ENCODE measurements at regions of chr5 and their contacts with region 1.

Region 1: GRCh38 chr5:55680353-55680752 is 31.8 kb downstream of the SLC38A9 start:
- DNase-seq: no peak
- ATAC-seq: no peak
- H3K4me3 ChIP-seq: no peak overlapping the region
- H3K27ac ChIP-seq: no peak overlapping the region
- H3K4me1 ChIP-seq: peaks cover 0 to 4% of the 10 kb centered on the region in 2 donors
- H3K27me3 ChIP-seq: no peaks in the 10 kb centered on the region
- CTCF ChIP-seq: no peak

Region 2: GRCh38 chr5:55338810-55339243 is 341.5 kb before region 1 on chr5:
- intact Hi-C with region 1: loop called in 1 of 2 experiments (anchors 10 kb)
- DNase-seq: no peak
- ATAC-seq: no peak
- H3K4me3 ChIP-seq: no peak overlapping the region
- H3K27ac ChIP-seq: no peak overlapping the region
- H3K4me1 ChIP-seq: peaks cover 0 to 11% of the 10 kb centered on the region in 2 donors
- H3K27me3 ChIP-seq: no peaks in the 10 kb centered on the region
- CTCF ChIP-seq: no peak

Region 3: DNA sequence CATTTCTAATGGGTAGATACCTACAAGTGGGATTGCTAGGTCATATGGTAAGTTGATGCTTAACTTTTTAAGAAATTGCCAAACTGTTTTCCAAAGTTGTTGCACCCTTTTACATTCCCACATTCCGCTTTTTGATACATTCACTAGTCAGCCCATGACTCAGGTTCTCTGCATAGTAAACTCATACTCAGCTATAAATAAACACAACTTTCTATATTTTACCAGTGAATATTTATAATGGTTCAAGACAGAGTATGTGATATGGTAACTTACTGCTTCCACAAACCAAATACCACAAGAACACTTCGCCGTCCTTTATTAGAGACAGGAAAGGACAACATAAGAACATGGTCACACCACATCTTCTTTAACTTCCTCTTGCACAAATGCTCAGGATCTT is 199.6 kb before region 1 on chr5:
- intact Hi-C with region 1: no loop called
- DNase-seq: no peak
- ATAC-seq: no peak
- H3K4me3 ChIP-seq: no peak overlapping the region
- H3K27ac ChIP-seq: no peak overlapping the region
- H3K4me1 ChIP-seq: no peaks in the 10 kb centered on the region
- H3K27me3 ChIP-seq: no peaks in the 10 kb centered on the region
- CTCF ChIP-seq: no peak

Region 4: DNA sequence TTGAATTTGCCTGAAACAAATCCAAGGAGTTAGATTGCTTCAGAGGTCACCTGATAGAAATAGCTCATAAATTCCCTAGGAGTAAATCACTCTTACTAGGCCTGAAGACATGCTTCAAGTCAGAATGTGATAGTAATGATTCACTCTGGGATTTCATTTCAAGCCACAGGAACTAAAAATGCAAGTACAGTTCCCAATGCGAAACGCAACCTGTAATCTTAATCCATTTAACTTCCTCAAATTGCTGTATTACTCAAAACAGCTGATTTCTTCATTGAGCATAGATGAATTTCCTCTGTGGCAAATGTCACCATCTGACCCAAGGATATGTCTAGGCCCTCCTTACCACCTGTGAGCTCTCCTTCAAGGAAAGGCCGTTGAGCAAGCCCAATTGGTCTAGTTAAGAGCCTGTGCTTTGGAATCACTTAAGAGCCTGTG is 346.5 kb after region 1 on chr5:
- intact Hi-C with region 1: no loop called
- DNase-seq: no peak
- ATAC-seq: peak; percentile 43
- H3K4me3 ChIP-seq: no peak overlapping the region
- H3K27ac ChIP-seq: peak overlapping the region in 1 of 2 donors; percentile 53
- H3K4me1 ChIP-seq: peaks cover 0 to 18% of the 10 kb centered on the region in 2 donors
- H3K27me3 ChIP-seq: no peaks in the 10 kb centered on the region
- CTCF ChIP-seq: no peak